ENCODE measurements at regions of chr10 and their contacts with region 1.

Region 1: DNA sequence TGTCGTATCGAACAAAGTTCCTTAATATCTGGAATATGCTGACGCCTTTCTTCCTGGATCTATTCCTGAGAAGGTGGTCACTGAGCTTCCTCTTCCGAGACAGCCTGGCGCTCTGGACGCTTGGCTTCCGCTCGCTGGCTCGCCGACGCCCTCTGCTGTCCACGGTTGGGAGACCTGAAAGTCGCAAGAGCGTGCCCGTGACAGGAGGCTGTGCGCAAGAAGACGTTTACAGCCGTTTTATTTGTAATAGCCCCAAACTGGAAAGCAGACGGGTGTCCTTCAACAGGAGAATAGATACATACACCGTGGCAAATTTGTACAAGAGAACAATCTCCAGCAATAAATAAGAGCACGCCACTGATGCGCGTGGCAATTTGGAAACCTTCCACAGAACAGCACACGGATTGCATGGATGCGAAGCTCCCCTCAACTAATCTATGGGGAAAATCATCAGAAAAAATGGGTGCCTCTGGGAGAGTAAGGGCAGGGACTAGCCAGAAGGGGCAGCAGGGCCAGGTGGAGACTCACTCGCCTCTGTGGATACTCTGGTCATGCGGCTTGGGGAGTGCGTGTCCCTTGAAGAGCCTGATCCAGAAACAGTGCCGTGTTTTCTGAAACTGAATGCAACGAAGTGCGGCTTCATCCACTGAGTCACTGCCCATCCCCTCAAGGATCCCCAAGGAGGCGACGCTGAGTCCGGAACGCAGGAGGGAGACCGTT is 41.5 kb upstream of the BNIP3 start:
- DNase-seq: peak; percentile 90
- H3K4me3 ChIP-seq: peak overlapping the region; percentile 16 to 49 (median 42)
- H3K27ac ChIP-seq: peak overlapping the region in 1 of 4 donors; percentile 25
- H3K4me1 ChIP-seq: peaks cover 0 to 9% (median 8%) of the 10 kb centered on the region in 4 donors
- H3K27me3 ChIP-seq: peaks cover 0 to 18% (median 0%) of the 10 kb centered on the region in 3 donors
- CTCF ChIP-seq: peak; percentile 87 to 95 (median 90)
- EP300 ChIP-seq: no peak
- POLR2A ChIP-seq: no peak

Region 2: DNA sequence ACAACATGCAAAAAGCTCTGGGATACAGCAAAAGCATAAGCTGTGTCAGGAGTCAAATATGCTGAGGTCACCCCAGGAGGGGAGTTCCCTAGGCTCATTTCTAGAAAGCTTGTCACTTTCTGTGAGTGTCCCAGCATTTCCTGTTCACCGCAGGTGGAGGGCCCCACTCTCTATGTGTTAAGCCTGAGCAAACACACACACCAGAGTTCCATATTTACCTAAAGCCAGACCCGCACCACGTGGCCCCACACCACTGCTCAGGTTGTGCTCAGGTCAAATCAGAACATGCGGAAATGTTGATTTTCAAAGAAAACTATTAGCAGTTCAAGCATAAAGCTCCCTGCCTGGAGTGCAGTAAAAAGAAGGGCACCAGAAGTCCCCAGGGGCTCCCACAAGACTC is 382.0 kb before region 1 on chr10:
- intact Hi-C with region 1: no loop called
- DNase-seq: no peak
- H3K4me3 ChIP-seq: no peak overlapping the region
- H3K27ac ChIP-seq: no peak overlapping the region
- H3K4me1 ChIP-seq: no peaks in the 10 kb centered on the region
- H3K27me3 ChIP-seq: peaks cover 0 to 5% (median 0%) of the 10 kb centered on the region in 3 donors
- CTCF ChIP-seq: no peak
- EP300 ChIP-seq: no peak
- POLR2A ChIP-seq: no peak

Region 3: GRCh38 chr10:131885391-131886161 is 137.7 kb before region 1 on chr10:
- intact Hi-C with region 1: loop called (anchors 1 kb)
- DNase-seq: peak; percentile 86
- H3K4me3 ChIP-seq: no peak overlapping the region
- H3K27ac ChIP-seq: no peak overlapping the region
- H3K4me1 ChIP-seq: peaks cover 0 to 7% (median 6%) of the 10 kb centered on the region in 4 donors
- H3K27me3 ChIP-seq: peaks cover 0 to 8% (median 3%) of the 10 kb centered on the region in 3 donors
- CTCF ChIP-seq: peak; percentile 90 to 97 (median 92)
- EP300 ChIP-seq: no peak
- POLR2A ChIP-seq: no peak

Region 4: GRCh38 chr10:131900350-131901146 is 122.7 kb before region 1 on chr10 and contains the start of gene PPP2R2D:
- intact Hi-C with region 1: loop called (anchors 5 kb)
- DNase-seq: peak; percentile 97
- H3K4me3 ChIP-seq: peak within 1 kb of the TSS; percentile 84 to 97 (median 92)
- H3K27ac ChIP-seq: peak within 1 kb of the TSS; percentile 91 to 99 (median 96)
- H3K4me1 ChIP-seq: peaks cover 0 to 46% (median 43%) of the 10 kb centered on the region in 4 donors
- H3K27me3 ChIP-seq: peaks cover 0 to 17% (median 0%) of the 10 kb centered on the region in 3 donors
- CTCF ChIP-seq: no peak
- EP300 ChIP-seq: no peak
- POLR2A ChIP-seq: no peak
- total RNA-seq, gene PPP2R2D: 22.7 to 44.0 (median 34.6) TPM

Region 5: DNA sequence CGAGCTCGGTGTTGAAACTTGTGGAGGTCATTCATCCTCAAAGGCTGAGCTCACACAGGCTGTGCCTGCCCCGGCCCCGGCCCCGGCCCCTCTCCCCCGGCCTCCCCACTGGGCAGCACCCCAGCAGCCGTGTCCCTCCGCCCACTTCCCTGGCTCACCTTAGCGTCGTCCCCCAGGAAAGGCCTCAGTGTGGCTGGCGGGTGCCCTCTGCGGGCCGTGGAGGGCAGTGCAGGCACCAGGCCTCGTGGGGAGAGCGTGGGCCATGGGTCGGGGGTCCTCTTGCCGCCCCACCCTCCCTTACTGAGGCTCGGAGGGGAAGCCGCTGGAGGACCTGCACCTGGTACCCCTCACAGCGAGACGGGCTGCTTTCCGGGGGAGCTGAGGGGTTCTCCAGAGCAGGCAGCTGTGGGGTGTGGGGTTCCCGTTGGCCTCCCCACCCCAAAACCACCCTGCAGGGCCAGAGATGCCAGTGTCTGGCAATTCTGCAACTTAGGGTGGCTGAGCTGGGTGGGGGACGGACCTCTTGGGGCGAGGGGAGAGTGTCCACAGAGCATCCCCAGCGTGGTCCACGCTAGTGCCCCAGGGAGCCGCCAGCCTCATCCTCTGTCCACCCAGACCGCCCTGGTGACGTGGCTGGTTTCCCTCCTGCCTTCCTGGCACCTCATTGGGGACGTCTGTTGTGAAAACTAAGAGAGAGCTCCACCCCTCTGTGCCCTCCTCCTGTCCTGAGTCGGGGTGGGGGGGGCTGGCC is 119.3 kb after region 1 on chr10:
- intact Hi-C with region 1: loop called (anchors 5 kb)
- DNase-seq: no peak
- H3K4me3 ChIP-seq: no peak overlapping the region
- H3K27ac ChIP-seq: no peak overlapping the region
- H3K4me1 ChIP-seq: peaks cover 0 to 7% (median 3%) of the 10 kb centered on the region in 4 donors
- H3K27me3 ChIP-seq: no peaks in the 10 kb centered on the region
- CTCF ChIP-seq: peak; percentile 47 to 95 (median 68)
- EP300 ChIP-seq: no peak
- POLR2A ChIP-seq: no peak

Region 6: DNA sequence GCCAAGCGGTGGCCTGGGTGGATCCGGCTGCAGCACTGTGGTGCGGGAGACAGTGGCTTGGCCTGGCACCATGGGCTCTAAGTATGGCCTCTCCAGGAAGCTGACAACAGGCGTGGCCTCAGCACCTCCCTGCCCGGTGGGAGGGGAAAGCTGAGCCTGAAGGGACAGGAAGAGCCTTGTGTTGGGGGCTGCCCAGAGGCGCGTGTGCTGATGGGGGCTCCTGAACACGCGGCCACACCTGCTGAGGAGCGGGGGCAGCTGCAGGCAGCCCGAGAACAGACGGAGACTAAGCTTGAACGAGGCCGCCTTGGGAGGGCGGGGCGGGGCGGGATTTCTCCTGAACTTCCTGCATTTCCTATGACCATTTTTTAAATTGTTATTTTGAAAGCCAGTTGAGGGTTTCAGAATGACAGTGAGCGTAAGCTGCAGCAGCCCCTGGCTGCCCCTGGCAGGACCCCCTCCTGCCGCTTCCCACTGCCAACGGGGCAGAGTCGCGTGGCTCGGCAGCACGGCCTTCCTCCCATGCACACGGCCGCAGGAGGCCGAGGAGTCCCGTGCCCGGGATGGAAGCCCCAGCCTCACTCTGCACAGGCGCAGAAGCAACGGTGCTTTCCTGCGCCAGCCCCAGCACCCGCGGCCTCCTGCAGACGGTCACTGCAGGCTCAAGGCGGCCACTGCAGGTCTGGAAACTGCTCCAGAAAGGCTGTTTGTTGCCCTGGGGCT is 206.7 kb after region 1 on chr10:
- intact Hi-C with region 1: no loop called
- DNase-seq: no peak
- H3K4me3 ChIP-seq: peak overlapping the region; percentile 10 to 38 (median 25)
- H3K27ac ChIP-seq: peak overlapping the region; percentile 11 to 67 (median 42)
- H3K4me1 ChIP-seq: peaks cover 0 to 15% (median 8%) of the 10 kb centered on the region in 4 donors
- H3K27me3 ChIP-seq: no peaks in the 10 kb centered on the region
- CTCF ChIP-seq: no peak
- EP300 ChIP-seq: no peak
- POLR2A ChIP-seq: no peak

Region 7: DNA sequence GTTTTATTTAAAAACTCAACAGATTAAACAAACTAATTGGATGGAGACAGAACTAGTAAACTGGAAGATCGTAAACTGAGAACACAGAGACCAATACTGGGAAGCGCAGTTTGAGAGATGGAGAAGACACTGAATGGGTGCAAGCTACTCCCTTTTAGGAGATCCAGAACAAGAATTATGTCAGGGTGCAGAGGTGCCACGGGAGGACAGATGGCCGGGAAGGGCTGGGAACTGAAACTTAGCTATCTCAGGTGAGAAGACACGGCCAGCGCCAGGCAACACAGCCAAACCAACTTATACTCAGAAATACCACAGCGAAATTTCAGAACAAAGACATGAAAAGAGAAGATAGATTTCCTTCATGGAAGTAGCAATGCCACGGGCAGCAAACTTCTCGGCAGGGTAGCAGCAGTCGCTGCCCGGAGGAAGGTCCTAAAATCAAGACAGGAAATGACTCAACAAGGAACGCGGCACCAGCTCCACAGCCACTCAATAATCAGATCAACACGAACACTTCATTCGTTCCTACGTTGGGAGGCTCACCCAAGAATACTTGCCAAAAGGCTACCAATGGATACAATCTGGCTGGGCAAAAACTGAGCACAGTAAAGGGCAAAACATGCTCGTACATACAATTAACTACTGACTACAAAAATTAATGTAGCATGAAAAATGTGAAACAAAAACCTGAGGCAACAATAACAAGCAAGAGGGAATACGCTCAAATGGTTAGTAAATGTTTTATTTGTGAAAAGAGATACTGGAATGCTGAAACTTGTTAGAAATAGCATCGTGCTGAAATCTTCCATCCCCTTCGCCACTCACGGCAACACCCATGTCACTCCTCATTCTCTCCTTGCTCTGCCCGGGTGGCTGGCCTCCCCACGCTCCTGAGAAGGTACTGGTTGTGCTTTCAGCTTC is 306.6 kb after region 1 on chr10:
- intact Hi-C with region 1: no loop called
- DNase-seq: peak; percentile 66
- H3K4me3 ChIP-seq: peak overlapping the region in 3 of 4 donors; percentile 1 to 85 (median 82)
- H3K27ac ChIP-seq: peak overlapping the region; percentile 2 to 90 (median 2)
- H3K4me1 ChIP-seq: peaks cover 0 to 40% (median 33%) of the 10 kb centered on the region in 4 donors
- H3K27me3 ChIP-seq: no peaks in the 10 kb centered on the region
- CTCF ChIP-seq: no peak
- EP300 ChIP-seq: no peak
- POLR2A ChIP-seq: no peak

Measured in sigmoid colon (tissue), 7 donors.